H1 (cell line): ENCODE measurements at regions of chr16 and their contacts with region 1.

Region 1: DNA sequence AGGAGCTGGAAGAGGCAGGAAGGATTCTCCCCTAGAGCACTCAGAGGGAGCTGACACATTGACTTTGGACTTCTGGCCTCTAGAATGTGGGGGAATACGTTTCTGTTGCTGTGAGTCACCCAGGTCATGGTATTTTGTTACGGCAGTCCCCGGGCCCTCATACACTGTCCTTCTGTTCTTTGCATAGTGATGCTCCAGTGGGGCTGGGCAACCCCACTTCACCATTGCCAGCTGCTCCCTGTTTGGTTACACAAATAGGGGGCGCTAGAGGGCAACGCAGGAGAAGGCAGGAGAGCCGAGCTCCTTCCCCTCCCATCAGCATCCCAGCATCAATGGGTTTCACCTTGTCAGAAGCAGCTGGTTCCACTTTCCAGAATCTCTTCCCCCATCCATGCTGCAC is 257.7 kb upstream of the FOXF1 start:
- DNase-seq: peak; percentile 9 to 82
- H3K4me3 ChIP-seq: no peak overlapping the region
- H3K27ac ChIP-seq: no peak overlapping the region
- H3K4me1 ChIP-seq: no peaks in the 10 kb centered on the region
- H3K27me3 ChIP-seq: no peaks in the 10 kb centered on the region
- CTCF ChIP-seq: peak; percentile 84 to 85 (median 85)
- EP300 ChIP-seq: no peak; a peak in 1 of 3 replicates
- POLR2A ChIP-seq: no peak
- RAD21 ChIP-seq: peak; percentile 89 to 91

Region 2: GRCh38 chr16:86151239-86151851 is 101.3 kb before region 1 on chr16:
- CTCF ChIA-PET with region 1: interaction called, 11 read pairs
- POLR2A ChIA-PET with region 1: no interaction called
- DNase-seq: no peak
- H3K4me3 ChIP-seq: no peak overlapping the region
- H3K27ac ChIP-seq: no peak overlapping the region
- H3K4me1 ChIP-seq: no peaks in the 10 kb centered on the region
- H3K27me3 ChIP-seq: no peaks in the 10 kb centered on the region; a peak in 1 of 7 replicates
- CTCF ChIP-seq: no peak
- EP300 ChIP-seq: no peak
- POLR2A ChIP-seq: no peak
- RAD21 ChIP-seq: no peak

Region 3: GRCh38 chr16:86242244-86243122 is 10.1 kb before region 1 on chr16:
- CTCF ChIA-PET with region 1: interaction called, 31 read pairs
- POLR2A ChIA-PET with region 1: interaction called, 3 read pairs
- DNase-seq: peak in 1 of 2 experiments; percentile 40
- H3K4me3 ChIP-seq: no peak overlapping the region
- H3K27ac ChIP-seq: no peak overlapping the region
- H3K4me1 ChIP-seq: peaks cover 0 to 15% (median 6%) of the 10 kb centered on the region in 4 experiments; a peak in 6 of 7 replicates
- H3K27me3 ChIP-seq: peaks cover 0 to 2% (median 0%) of the 10 kb centered on the region in 4 experiments; a peak in 1 of 7 replicates
- CTCF ChIP-seq: no peak
- EP300 ChIP-seq: no peak
- POLR2A ChIP-seq: no peak
- RAD21 ChIP-seq: no peak

Region 4: GRCh38 chr16:86285938-86286921 is 33.6 kb after region 1 on chr16:
- CTCF ChIA-PET with region 1: interaction called, 15 read pairs
- POLR2A ChIA-PET with region 1: no interaction called
- DNase-seq: no peak
- H3K4me3 ChIP-seq: peak overlapping the region; percentile 18 to 62 (median 46)
- H3K27ac ChIP-seq: no peak overlapping the region
- H3K4me1 ChIP-seq: peaks cover 6 to 32% (median 19%) of the 10 kb centered on the region in 4 experiments
- H3K27me3 ChIP-seq: peaks cover 45 to 82% (median 73%) of the 10 kb centered on the region in 4 experiments
- CTCF ChIP-seq: no peak
- EP300 ChIP-seq: no peak
- POLR2A ChIP-seq: no peak
- RAD21 ChIP-seq: no peak

Region 5: GRCh38 chr16:86319585-86320270 is 67.1 kb after region 1 on chr16:
- CTCF ChIA-PET with region 1: interaction called, 10 read pairs
- POLR2A ChIA-PET with region 1: no interaction called
- DNase-seq: no peak
- H3K4me3 ChIP-seq: no peak overlapping the region
- H3K27ac ChIP-seq: no peak overlapping the region
- H3K4me1 ChIP-seq: no peaks in the 10 kb centered on the region
- H3K27me3 ChIP-seq: no peaks in the 10 kb centered on the region; a peak in 1 of 7 replicates
- CTCF ChIP-seq: no peak
- EP300 ChIP-seq: no peak
- POLR2A ChIP-seq: no peak
- RAD21 ChIP-seq: no peak

Region 6: GRCh38 chr16:86367291-86368072 is 114.9 kb after region 1 on chr16:
- CTCF ChIA-PET with region 1: no interaction called
- POLR2A ChIA-PET with region 1: no interaction called
- DNase-seq: no peak
- H3K4me3 ChIP-seq: no peak overlapping the region
- H3K27ac ChIP-seq: no peak overlapping the region
- H3K4me1 ChIP-seq: peaks cover 4 to 21% (median 5%) of the 10 kb centered on the region in 4 experiments
- H3K27me3 ChIP-seq: no peaks in the 10 kb centered on the region
- CTCF ChIP-seq: no peak
- EP300 ChIP-seq: no peak
- POLR2A ChIP-seq: no peak
- RAD21 ChIP-seq: no peak